ENCODE measurements at regions of chr14 and their contacts with region 1.

Region 1: GRCh38 chr14:97319691-97320090 is 522.5 kb downstream of the VRK1 start:
- DNase-seq: no peak
- ATAC-seq: no peak
- H3K4me3 ChIP-seq: no peak overlapping the region
- H3K4me3 Mint-ChIP-seq: no peak overlapping the region
- H3K27ac ChIP-seq: no peak overlapping the region
- H3K27ac Mint-ChIP-seq: no peak overlapping the region
- H3K4me1 ChIP-seq: no peaks in the 10 kb centered on the region
- H3K4me1 Mint-ChIP-seq: peaks cover 0 to 4% (median 2%) of the 10 kb centered on the region in 3 donors
- H3K27me3 ChIP-seq: no peaks in the 10 kb centered on the region
- H3K27me3 Mint-ChIP-seq: no peaks in the 10 kb centered on the region

Region 2: GRCh38 chr14:97206916-97207315 is 112.8 kb before region 1 on chr14:
- CTCF ChIA-PET with region 1: no interaction called
- POLR2A ChIA-PET with region 1: no interaction called
- DNase-seq: no peak
- ATAC-seq: no peak
- H3K4me3 ChIP-seq: no peak overlapping the region
- H3K4me3 Mint-ChIP-seq: no peak overlapping the region
- H3K27ac ChIP-seq: no peak overlapping the region
- H3K27ac Mint-ChIP-seq: no peak overlapping the region
- H3K4me1 ChIP-seq: no peaks in the 10 kb centered on the region
- H3K4me1 Mint-ChIP-seq: no peaks in the 10 kb centered on the region
- H3K27me3 ChIP-seq: peaks cover 0 to 10% of the 10 kb centered on the region in 2 experiments
- H3K27me3 Mint-ChIP-seq: peaks cover 4 to 11% of the 10 kb centered on the region in 2 donors

Region 3: GRCh38 chr14:97380539-97380941 is 60.8 kb after region 1 on chr14:
- CTCF ChIA-PET with region 1: no interaction called
- POLR2A ChIA-PET with region 1: interaction called in 1 of 2 experiments, 11 read pairs
- DNase-seq: peak in 5 of 35 experiments; percentile 6 to 41 (median 30)
- ATAC-seq: peak in 3 of 4 experiments; percentile 74 to 81 (median 75)
- H3K4me3 ChIP-seq: no peak overlapping the region
- H3K4me3 Mint-ChIP-seq: peak overlapping the region in 2 of 3 donors; percentile 5 to 79
- H3K27ac ChIP-seq: peak overlapping the region; percentile 56
- H3K27ac Mint-ChIP-seq: peak overlapping the region; percentile 81 to 91
- H3K4me1 ChIP-seq: peaks cover 14 to 43% of the 10 kb centered on the region in 2 experiments
- H3K4me1 Mint-ChIP-seq: peaks cover 54 to 60% (median 56%) of the 10 kb centered on the region in 3 donors
- H3K27me3 ChIP-seq: no peaks in the 10 kb centered on the region
- H3K27me3 Mint-ChIP-seq: no peaks in the 10 kb centered on the region

Region 4: GRCh38 chr14:98085751-98086150 is 766.1 kb after region 1 on chr14:
- CTCF ChIA-PET with region 1: no interaction called
- POLR2A ChIA-PET with region 1: interaction called in 1 of 2 experiments, 10 read pairs
- DNase-seq: no peak
- ATAC-seq: no peak
- H3K4me3 ChIP-seq: no peak overlapping the region
- H3K4me3 Mint-ChIP-seq: no peak overlapping the region
- H3K27ac ChIP-seq: no peak overlapping the region
- H3K27ac Mint-ChIP-seq: no peak overlapping the region
- H3K4me1 ChIP-seq: no peaks in the 10 kb centered on the region
- H3K4me1 Mint-ChIP-seq: peaks cover 1 to 5% (median 4%) of the 10 kb centered on the region in 3 donors
- H3K27me3 ChIP-seq: no peaks in the 10 kb centered on the region
- H3K27me3 Mint-ChIP-seq: no peaks in the 10 kb centered on the region